BJ (cell line): ENCODE measurements at regions of chr2 and their contacts with region 1.

Region 1: DNA sequence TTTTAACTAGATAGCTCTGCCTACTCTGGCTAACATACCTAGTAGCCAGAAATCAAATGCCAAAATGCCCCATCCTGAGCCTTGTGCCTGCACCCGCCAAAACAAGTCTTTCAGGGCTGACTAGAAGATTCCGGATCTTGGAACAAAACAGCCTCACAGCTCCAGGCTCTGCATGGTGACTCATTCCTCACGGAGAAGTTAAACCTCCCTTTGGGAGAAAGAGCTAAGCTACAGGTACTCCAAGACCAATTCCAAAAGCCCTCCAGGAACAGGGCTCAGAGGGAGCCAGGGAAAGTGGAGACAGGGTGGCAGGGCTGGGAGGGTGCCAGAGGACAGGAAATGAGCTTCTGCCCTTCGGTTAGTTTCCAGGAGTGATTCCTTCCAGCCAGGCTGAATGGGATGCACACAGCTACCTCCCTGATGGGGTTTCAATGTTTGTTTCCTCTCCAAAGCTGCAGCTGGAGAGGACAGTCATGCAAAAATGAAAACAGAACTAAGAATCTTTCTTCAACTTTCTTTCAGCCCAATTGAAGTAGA is 295.6 kb downstream of the TNS1 start:
- DNase-seq: peak; percentile 24
- H3K4me3 ChIP-seq: no peak overlapping the region
- H3K27me3 ChIP-seq: no peaks in the 10 kb centered on the region
- CTCF ChIP-seq: no peak

Region 2: DNA sequence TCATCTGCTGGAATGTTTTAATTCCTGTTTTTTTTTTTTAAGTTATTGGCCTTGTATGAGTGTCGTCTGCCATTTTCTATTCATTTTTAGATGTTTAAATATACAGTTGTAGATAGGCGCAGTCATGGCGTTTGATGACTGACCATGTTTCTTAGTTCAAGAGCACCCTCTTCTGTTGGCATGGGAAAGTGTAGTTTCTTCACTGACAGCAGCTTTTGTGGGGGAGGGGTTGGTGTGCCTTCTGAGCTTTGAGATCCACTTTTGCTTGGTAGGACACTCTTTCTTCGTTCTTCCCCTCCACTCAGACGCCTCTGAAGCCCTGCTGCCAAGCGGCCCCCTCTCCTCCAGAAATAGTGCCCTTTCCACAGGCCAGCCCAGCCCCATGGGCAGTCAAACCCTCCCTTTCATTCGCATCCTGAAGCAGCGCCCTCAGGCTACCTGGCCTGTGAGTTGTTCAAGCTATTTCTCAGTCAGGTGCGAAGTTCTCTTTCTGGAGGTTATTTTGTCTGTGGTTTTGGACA is 196.4 kb before region 1 on chr2:
- CTCF ChIA-PET with region 1: interaction called, 21 read pairs
- POLR2A ChIA-PET with region 1: no interaction called
- DNase-seq: peak; percentile 38
- H3K4me3 ChIP-seq: no peak overlapping the region
- H3K27me3 ChIP-seq: no peaks in the 10 kb centered on the region
- CTCF ChIP-seq: peak; percentile 80